CD4-positive, alpha-beta memory T cell (primary cell): ENCODE measurements at regions of chr7 and their contacts with region 1.

Region 1: DNA sequence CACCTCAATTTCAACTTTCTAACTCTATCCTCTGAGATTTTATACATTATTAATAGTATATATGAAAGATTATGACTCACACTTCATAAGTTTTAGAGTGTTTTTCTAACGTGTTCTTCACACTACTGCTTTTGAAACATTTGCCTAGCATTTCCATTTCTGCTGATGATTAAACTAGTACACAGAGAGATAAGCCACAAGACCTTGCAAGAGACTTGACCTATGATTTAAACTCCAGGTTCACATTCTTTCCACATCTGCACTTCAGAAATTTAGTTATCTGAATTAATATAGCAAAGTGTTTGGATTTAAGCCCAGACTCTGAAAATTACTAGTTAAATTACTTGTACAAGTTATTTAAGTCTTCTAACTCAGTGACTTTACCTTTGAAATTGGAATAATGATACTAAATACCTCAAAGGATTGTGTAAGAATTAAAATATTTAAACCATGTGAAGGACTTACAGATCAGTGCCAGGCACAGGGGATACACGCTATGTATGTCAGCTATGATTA is 66.6 kb downstream of the PCLO start:
- DNase-seq: no peak
- H3K4me3 ChIP-seq: no peak overlapping the region
- H3K4me3 Mint-ChIP-seq: no peak overlapping the region
- H3K27ac ChIP-seq: no peak overlapping the region
- H3K27ac Mint-ChIP-seq: no peak overlapping the region
- H3K4me1 ChIP-seq: no peaks in the 10 kb centered on the region
- H3K4me1 Mint-ChIP-seq: no peaks in the 10 kb centered on the region
- H3K27me3 ChIP-seq: no peaks in the 10 kb centered on the region
- H3K27me3 Mint-ChIP-seq: no peaks in the 10 kb centered on the region

Region 2: DNA sequence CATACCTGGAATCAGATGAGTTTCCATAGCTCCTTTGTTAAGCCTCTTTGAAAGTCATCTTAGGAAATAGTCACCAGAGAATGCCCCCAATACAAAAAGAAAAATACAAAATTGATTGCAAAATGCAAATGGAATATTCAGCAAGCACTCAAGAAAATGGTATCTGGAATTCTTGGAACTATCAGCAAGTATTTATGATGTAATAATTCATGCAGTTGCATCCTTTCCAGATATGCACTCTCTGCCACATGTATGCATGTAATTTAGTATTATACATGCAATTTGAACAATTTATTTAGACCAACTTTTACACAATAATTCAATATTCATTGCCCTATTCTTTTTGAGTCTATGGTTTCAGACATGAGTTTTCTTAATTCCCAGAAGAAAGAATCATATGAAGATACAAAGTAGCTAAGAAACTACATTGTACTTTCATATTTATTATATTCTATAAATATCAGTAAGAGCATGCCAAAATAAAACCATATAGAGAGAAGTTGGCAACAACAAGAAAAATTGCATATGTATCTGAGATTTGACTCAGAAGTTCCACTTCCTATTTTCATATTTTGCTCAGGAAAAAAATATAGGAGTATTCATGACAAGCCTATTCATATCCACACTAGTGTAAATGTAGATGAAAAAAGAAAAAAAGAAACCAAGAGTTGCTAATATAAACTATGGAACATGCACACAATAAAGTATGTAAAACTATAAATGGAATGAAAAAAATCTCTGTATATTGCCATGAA is 1752.3 kb after region 1 on chr7:
- CTCF ChIA-PET with region 1: no interaction called
- POLR2A ChIA-PET with region 1: no interaction called
- intact Hi-C with region 1: loop called (anchors 5 kb)
- DNase-seq: no peak
- H3K4me3 ChIP-seq: no peak overlapping the region
- H3K4me3 Mint-ChIP-seq: no peak overlapping the region
- H3K27ac ChIP-seq: no peak overlapping the region
- H3K27ac Mint-ChIP-seq: no peak overlapping the region
- H3K4me1 ChIP-seq: no peaks in the 10 kb centered on the region
- H3K4me1 Mint-ChIP-seq: no peaks in the 10 kb centered on the region
- H3K27me3 ChIP-seq: no peaks in the 10 kb centered on the region
- H3K27me3 Mint-ChIP-seq: no peaks in the 10 kb centered on the region